ENCODE measurements at regions of chr11 and their contacts with region 1.

Region 1: GRCh38 chr11:128802358-128802981 is 64.6 kb downstream of the KCNJ1 start:
- DNase-seq: peak; percentile 36
- H3K4me3 ChIP-seq: no peak overlapping the region
- H3K27ac ChIP-seq: no peak overlapping the region
- H3K4me1 ChIP-seq: no peaks in the 10 kb centered on the region
- H3K27me3 ChIP-seq: no peaks in the 10 kb centered on the region
- CTCF ChIP-seq: peak; percentile 43 to 44
- POLR2A ChIP-seq: no peak

Region 2: GRCh38 chr11:128483211-128483788 is 319.2 kb before region 1 on chr11:
- CTCF ChIA-PET with region 1: no interaction called
- POLR2A ChIA-PET with region 1: no interaction called
- dilution Hi-C with region 1: no loop called
- intact Hi-C with region 1: no loop called
- DNase-seq: no peak
- H3K4me3 ChIP-seq: no peak overlapping the region
- H3K27ac ChIP-seq: no peak overlapping the region
- H3K4me1 ChIP-seq: peaks cover 4% of the 10 kb centered on the region
- H3K27me3 ChIP-seq: no peaks in the 10 kb centered on the region
- CTCF ChIP-seq: no peak
- POLR2A ChIP-seq: no peak

Region 3: DNA sequence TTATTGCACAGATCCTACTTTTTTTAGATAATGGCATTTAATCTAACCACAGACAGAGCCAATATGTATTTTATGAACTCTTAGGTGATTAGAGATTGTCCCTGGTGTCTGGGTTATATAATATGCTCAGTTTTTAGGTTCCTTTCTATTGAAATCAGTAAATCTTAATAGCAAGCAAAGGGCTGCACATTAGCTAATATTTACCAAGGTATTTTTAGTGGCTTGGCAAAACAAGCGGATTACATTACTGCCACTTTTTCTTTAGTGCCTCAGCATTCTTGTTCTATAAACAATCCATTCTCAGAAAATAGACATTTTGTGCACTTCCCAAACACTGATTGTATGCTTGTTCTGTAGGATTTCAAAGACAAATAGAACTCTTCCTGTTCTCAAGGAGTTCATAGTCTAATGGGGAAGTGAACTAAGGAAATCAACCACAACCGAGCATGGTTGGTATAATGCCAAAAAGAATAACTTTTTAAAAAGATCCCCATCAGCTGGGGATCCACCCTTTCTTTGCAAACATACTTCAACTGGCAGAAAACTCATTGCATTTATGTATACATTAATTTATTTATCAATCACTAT is 40.8 kb after region 1 on chr11:
- CTCF ChIA-PET with region 1: interaction called, 6 read pairs
- POLR2A ChIA-PET with region 1: no interaction called
- dilution Hi-C with region 1: no loop called
- intact Hi-C with region 1: loop called (anchors 1 kb)
- DNase-seq: peak; percentile 71
- H3K4me3 ChIP-seq: no peak overlapping the region
- H3K27ac ChIP-seq: no peak overlapping the region
- H3K4me1 ChIP-seq: peaks cover 17% of the 10 kb centered on the region
- H3K27me3 ChIP-seq: no peaks in the 10 kb centered on the region
- CTCF ChIP-seq: no peak
- POLR2A ChIP-seq: no peak

Region 4: DNA sequence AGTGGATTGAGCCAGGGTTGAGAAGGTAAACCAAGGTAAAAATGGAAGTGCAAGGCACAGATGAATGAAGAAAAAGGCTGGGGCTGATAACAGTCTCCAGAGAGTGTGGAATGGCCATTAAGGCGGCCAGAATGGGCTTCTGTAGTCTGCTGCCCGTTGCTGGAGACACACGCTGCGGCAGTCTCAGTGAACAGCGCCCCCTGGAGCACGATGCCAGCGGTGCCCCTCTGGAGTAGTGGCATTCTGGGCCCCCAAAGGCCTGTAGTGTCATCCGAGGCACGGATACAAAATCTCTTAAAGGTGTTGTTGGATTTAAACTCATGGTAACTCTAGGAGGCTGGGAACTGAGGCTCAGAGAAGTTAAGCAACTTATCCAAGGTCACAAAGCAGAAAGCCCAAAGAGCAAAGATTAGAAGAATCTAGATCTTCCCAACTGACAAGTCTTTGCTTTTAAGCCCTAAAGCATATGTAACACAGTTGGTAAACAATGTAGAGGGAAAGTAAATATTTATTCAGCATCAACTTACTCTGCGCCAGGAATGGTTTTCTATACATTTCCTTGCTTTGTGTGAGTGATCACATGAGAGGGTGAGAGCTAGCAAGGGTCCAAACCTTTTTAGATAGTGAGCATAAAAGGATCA is 46.5 kb after region 1 on chr11:
- CTCF ChIA-PET with region 1: interaction called, 6 read pairs
- POLR2A ChIA-PET with region 1: no interaction called
- dilution Hi-C with region 1: no loop called
- intact Hi-C with region 1: loop called (anchors 2 kb)
- DNase-seq: peak; percentile 72
- H3K4me3 ChIP-seq: no peak overlapping the region
- H3K27ac ChIP-seq: no peak overlapping the region
- H3K4me1 ChIP-seq: peaks cover 4% of the 10 kb centered on the region
- H3K27me3 ChIP-seq: no peaks in the 10 kb centered on the region
- CTCF ChIP-seq: peak; percentile 94 to 97
- POLR2A ChIP-seq: no peak

Region 5: DNA sequence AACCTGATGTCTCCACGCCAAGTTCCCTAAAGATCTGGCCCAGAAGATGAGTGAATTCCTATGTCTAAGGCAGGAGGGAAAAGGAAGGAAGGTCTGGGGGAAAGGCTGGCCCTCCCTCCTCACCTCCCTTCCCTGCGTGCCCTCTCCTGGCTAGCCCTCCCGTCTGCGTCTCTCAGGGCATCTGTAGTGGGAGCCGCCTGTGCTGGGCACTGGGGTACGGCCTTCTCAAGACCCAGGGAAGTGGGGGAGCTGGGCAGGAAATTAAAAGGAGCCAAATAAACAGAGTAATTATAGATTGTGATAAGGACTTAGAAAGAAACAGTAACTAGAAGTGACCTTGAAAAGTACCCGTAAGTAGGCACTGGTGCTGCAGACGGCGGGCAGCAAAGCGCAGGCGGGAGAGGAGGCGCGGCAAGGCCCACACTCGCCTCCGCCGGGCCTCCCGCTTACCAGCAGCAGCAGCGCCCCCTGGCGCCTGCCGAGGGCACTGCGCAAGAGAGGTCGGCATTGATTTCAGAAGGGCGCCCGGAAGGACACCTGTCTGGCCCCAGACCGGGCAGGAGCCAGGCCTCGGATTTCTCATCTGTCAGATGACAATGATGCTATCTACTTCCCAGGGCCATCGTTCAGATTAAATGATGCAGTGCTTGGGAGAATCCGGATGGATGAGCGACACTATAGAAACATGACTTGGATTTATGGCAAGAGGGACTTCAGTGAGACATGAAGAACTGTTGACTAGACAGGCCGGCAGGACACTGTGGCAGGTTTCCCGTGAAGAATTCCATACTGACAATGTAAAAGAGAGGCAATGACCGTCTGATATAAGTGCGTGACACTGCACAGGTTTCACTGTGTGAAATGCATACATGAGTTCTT is 57.3 kb after region 1 on chr11:
- CTCF ChIA-PET with region 1: interaction called, 7 read pairs
- POLR2A ChIA-PET with region 1: no interaction called
- dilution Hi-C with region 1: no loop called
- intact Hi-C with region 1: loop called (anchors 1 kb)
- DNase-seq: peak; percentile 74
- H3K4me3 ChIP-seq: no peak overlapping the region
- H3K27ac ChIP-seq: no peak overlapping the region
- H3K4me1 ChIP-seq: peaks cover 2% of the 10 kb centered on the region
- H3K27me3 ChIP-seq: no peaks in the 10 kb centered on the region
- CTCF ChIP-seq: peak; percentile 97 to 99
- POLR2A ChIP-seq: no peak

Measured in endothelial cell of umbilical vein (primary cell).